GM13976 (cell line): ENCODE measurements at regions of chr6 and their contacts with region 1.

Region 1: GRCh38 chr6:20534295-20535262 is at the start of gene CDKAL1:
- DNase-seq: peak; percentile 73
- CTCF ChIP-seq: no peak

Region 2: GRCh38 chr6:19873031-19873430 is 661.5 kb before region 1 on chr6:
- in situ Hi-C with region 1: no loop called
- DNase-seq: no peak
- CTCF ChIP-seq: no peak

Region 3: DNA sequence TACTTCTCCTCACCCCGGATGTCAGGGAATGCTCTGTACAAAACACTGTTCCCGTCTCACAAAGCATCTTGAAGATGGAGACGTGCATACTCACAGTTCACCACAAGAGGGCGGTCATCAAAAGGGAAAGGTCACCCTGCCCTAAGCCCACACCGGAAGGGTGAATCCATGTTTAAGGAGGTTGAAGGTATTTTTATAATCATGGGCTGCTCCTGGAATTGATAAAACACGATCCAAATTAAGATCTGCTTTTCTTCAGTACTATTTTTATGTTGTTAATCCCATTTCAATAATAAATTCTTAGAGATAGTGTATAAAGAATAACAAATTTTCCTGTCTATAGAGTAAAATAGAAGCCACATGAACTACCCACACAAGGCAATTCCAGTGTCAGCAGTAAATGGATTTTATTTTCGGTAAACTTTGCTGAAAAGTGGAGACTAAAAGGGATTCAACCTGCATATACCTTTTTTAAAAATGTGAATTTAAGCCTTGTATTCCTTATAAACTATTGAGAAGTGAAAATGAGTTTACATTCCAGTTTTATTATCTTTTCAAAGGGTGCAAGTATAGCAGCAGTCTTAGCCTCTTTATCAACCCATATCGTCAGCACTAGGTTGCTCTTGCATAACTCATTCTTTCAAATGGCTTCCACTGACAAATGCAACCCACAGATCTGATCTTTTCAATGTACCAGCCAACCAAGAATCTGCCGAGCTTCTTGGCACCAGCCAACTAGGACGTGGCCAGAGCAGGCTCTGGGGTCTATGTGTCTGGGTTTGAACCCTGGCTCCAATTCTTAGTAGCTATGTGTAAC is 242.6 kb before region 1 on chr6:
- in situ Hi-C with region 1: loop called (anchors 5 kb)
- DNase-seq: peak; percentile 62
- CTCF ChIP-seq: peak; percentile 83

Region 4: GRCh38 chr6:20377623-20378265 is 156.8 kb before region 1 on chr6:
- in situ Hi-C with region 1: no loop called
- DNase-seq: no peak
- CTCF ChIP-seq: no peak

Region 5: GRCh38 chr6:20401205-20402091 is 133.1 kb before region 1 on chr6 and contains the start of gene E2F3:
- in situ Hi-C with region 1: loop called (anchors 10 kb)
- DNase-seq: peak; percentile 99
- CTCF ChIP-seq: no peak

Region 6: DNA sequence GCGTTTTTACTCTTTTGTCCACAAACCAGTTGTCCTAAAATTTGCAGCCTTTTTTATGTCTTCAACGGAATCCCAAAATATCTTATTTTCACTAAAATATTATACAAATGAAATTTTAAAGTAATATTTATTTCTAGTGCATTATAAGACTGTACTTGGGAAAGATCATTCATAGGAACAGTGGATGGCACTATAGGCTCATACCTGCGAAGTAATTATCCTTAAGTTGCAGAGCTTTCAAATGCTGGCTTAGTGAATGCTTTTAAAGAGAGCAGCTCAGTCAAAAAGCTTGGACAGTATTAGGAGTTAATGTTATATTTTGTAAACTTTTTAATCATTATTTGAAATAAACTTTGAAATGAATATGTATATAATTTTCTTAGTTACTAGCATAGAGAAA is 254.6 kb after region 1 on chr6:
- in situ Hi-C with region 1: no loop called
- DNase-seq: no peak
- CTCF ChIP-seq: no peak

Region 7: GRCh38 chr6:20811109-20811746 is 276.6 kb after region 1 on chr6:
- in situ Hi-C with region 1: no loop called
- DNase-seq: no peak
- CTCF ChIP-seq: no peak